ENCODE measurements at regions of chr2 and their contacts with region 1.

Region 1: DNA sequence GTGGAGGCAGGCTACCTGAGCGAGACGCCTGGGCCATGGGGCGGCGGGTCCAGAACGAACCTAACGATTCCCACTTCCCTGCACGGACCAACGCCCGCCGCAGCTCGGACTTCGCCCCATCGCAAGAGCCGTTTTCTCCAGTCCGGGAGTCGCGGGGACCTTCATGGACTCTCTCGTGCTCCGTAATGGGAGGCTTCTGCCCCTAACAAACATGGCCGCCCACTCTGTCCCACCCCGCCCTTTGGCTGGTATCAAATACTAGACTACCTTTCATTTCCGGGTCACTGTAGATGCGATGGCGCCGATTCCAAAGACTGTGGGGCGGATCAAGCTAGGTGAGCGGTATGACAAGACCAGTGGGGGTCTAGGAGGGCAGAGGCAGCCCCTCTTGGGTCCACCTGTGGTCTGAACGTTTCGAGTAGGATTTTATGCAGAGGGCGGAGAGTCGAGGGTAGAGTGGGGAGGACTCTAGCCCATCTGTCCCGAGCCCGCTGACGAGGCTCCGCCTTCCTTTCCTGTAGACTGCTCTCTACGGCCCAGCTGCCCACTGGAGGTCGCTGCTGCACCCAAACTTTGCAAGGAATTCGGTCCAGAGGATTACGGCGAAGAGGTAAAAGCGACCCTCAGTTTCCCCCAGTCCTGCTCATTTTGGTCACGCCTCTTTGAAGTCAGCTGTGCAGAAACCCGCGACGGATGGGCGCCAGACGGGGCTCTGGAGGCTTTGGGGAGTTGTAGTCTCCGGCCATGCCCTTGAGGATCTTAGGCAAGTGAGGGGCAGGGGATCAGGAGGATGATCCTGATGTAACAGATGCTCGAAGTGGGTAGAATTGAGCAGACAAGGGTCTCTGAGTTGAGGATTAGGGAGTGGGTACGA is at the starts of genes CCDC142 and TTC31:
- DNase-seq: peak; percentile 98
- ATAC-seq: peak; percentile 93
- H3K4me3 Mint-ChIP-seq: peak within 1 kb of the TSS; percentile 86
- H3K27ac Mint-ChIP-seq: peak within 1 kb of the TSS; percentile 100
- H3K4me1 Mint-ChIP-seq: peaks cover 25% of the 10 kb centered on the region
- H3K27me3 Mint-ChIP-seq: no peaks in the 10 kb centered on the region
- CTCF ChIP-seq: peak; percentile 83
- total RNA-seq, gene CCDC142: 7.2 to 10.3 TPM
- total RNA-seq, gene TTC31: 20.3 to 21.9 TPM

Region 2: DNA sequence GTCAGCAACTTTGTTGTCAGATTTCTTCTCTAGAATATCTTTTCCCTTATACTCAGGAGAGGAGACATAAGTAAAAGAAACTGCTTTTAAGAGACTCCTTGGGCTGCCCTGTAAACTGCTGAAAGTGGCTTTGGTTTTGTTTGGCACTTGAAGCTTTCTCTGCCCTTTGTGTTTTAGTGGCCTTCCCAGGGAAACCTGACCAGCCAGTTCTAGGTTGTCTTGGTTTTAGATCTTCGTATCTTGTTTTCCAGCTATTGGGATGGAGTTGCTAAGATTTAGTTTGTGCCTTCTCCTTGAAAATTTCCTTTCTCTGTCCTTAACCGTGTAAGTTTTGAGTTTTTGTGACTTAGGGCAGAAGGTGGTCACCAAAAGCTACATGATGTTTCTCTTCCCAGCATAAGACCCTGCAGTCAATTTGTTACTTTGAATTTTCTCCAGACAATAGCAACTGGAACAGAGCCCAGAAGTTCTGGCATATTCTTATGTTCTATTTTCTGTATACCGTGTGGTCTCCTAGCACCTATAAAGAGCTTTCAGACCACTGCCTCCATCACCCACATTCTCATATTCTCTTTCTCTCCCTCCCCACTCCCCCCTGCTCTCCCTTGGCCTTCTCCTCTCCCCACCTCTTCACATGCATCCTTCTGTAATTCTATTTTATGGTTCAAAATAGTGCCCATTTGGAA is 416.4 kb before region 1 on chr2:
- CTCF ChIA-PET with region 1: no interaction called
- POLR2A ChIA-PET with region 1: no interaction called
- intact Hi-C with region 1: no loop called
- DNase-seq: no peak
- ATAC-seq: no peak
- H3K4me3 Mint-ChIP-seq: no peak overlapping the region
- H3K27ac Mint-ChIP-seq: no peak overlapping the region
- H3K4me1 Mint-ChIP-seq: peaks cover 22% of the 10 kb centered on the region
- H3K27me3 Mint-ChIP-seq: no peaks in the 10 kb centered on the region
- CTCF ChIP-seq: no peak

Region 3: GRCh38 chr2:74464406-74464928 is 18.6 kb before region 1 on chr2:
- CTCF ChIA-PET with region 1: interaction called, 6 read pairs
- POLR2A ChIA-PET with region 1: interaction called, 48 read pairs
- intact Hi-C with region 1: no loop called
- DNase-seq: no peak
- ATAC-seq: peak; percentile 6
- H3K4me3 Mint-ChIP-seq: peak overlapping the region; percentile 99
- H3K27ac Mint-ChIP-seq: peak overlapping the region; percentile 83
- H3K4me1 Mint-ChIP-seq: peaks cover 23% of the 10 kb centered on the region
- H3K27me3 Mint-ChIP-seq: no peaks in the 10 kb centered on the region
- CTCF ChIP-seq: no peak

Region 4: DNA sequence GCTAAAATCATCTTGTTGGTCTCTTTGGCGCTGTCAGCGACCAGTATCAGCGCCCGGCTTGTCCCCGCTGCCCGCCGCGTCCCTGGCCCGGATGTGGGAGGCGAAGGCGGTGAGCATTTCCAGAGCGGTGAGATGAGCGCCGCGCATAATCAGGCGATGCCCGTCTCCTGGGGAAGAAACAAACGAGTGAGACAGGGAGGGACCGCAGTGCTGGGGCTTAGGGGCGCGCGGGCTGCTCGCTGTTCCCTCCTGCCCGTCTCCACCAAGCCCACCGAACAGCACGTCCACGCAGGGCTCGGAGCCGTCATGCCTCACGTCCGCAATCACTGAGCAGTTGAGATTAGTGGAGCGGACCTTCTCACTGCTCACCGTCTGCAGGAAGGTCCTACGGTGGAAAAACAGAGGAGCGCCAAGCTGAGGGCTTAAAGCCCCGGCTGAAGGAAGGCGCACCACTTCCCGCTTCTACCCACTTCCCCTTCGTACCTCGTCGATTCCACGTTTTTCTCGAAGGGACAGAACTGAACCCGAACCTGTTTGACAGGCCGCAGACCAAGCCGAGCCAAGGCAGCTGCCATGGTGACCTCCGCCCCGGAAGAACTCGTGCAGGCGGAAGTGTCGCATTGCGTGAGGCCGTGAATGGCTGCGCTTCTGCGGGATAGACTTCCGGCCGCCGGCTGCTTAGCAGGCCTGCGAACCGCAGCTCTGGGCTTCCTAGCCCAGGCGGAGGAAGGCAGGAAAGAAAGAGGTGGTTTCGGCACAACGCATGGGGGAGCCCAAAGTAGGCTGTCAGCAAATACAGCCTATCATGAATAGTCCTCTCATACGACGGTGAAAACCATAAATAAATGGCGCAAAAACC is 10.7 kb before region 1 on chr2 and contains the start of gene MRPL53:
- CTCF ChIA-PET with region 1: interaction called, 35 read pairs
- POLR2A ChIA-PET with region 1: interaction called, 43 read pairs
- intact Hi-C with region 1: no loop called
- DNase-seq: peak; percentile 96
- ATAC-seq: peak; percentile 92
- H3K4me3 Mint-ChIP-seq: peak within 1 kb of the TSS; percentile 95
- H3K27ac Mint-ChIP-seq: peak within 1 kb of the TSS; percentile 93
- H3K4me1 Mint-ChIP-seq: peaks cover 16% of the 10 kb centered on the region
- H3K27me3 Mint-ChIP-seq: no peaks in the 10 kb centered on the region
- CTCF ChIP-seq: no peak
- total RNA-seq, gene MRPL53: 111 to 113 TPM

Region 5: GRCh38 chr2:74498500-74499266 is 15.6 kb after region 1 on chr2:
- CTCF ChIA-PET with region 1: interaction called, 32 read pairs
- POLR2A ChIA-PET with region 1: interaction called, 23 read pairs
- intact Hi-C with region 1: no loop called
- DNase-seq: peak; percentile 59
- ATAC-seq: peak; percentile 67
- H3K4me3 Mint-ChIP-seq: peak overlapping the region; percentile 78
- H3K27ac Mint-ChIP-seq: peak overlapping the region; percentile 63
- H3K4me1 Mint-ChIP-seq: peaks cover 28% of the 10 kb centered on the region
- H3K27me3 Mint-ChIP-seq: peaks cover 46% of the 10 kb centered on the region
- CTCF ChIP-seq: no peak